A673 (cell line): ENCODE measurements at regions of chr14 and their contacts with region 1.

Region 1: GRCh38 chr14:67166450-67166853 is 22.8 kb upstream of the GARIN2 start:
- DNase-seq: peak; percentile 68
- H3K4me3 ChIP-seq: no peak overlapping the region
- H3K27ac ChIP-seq: peak overlapping the region; percentile 60
- H3K4me1 ChIP-seq: peaks cover 47% of the 10 kb centered on the region
- H3K27me3 ChIP-seq: no peaks in the 10 kb centered on the region
- CTCF ChIP-seq: peak; percentile 93

Region 2: DNA sequence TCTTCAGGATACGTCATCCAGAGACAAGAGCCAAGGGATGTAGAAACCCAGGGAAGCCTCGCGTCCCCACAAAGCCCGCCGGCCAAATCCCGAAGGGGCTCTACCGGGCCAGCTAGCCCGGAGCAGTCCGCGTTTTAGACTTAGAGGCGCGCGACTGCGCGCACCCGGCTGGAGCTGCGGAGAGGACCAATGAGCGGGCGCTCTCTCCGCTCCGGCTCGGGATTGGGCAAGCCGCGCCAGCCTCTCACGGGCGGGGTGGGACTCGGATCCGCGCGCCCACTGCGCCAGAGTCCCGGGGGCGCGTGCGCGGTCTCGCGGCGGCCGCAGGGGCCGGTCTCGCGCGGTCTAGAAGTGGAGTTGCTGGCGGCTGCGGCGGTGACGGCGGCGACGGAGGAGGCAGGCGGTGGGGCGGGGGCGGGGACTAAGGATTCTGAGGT is 74.5 kb after region 1 on chr14:
- CTCF ChIA-PET with region 1: no interaction called
- POLR2A ChIA-PET with region 1: no interaction called
- intact Hi-C with region 1: loop called (anchors 2 kb)
- DNase-seq: peak; percentile 99
- H3K4me3 ChIP-seq: peak overlapping the region; percentile 78
- H3K27ac ChIP-seq: peak overlapping the region; percentile 92
- H3K4me1 ChIP-seq: peaks cover 20% of the 10 kb centered on the region
- H3K27me3 ChIP-seq: no peaks in the 10 kb centered on the region
- CTCF ChIP-seq: no peak

Region 3: DNA sequence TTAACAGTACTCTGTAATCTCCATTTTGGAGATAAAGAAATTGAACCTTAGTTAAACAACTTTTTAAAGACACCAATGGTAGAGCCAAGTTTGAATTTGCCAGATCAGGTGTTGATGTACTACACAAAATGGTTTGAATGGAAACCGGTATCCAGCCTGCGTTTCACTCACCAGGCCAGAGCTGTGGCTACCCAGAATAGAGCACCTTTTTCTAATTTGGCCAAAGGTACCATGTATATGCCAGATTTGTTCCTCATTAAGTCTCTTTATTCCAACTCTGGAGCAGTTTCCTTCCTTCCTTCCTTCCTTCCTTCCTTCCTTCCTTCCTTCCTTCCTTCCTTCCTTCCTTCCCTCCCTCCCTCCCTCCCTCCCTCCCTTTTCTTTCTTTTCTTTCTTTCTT is 114.1 kb after region 1 on chr14:
- CTCF ChIA-PET with region 1: interaction called, 44 read pairs
- POLR2A ChIA-PET with region 1: interaction called, 3 read pairs
- intact Hi-C with region 1: loop called (anchors 1 kb)
- DNase-seq: peak; percentile 92
- H3K4me3 ChIP-seq: peak overlapping the region; percentile 41
- H3K27ac ChIP-seq: peak overlapping the region; percentile 95
- H3K4me1 ChIP-seq: peaks cover 67% of the 10 kb centered on the region
- H3K27me3 ChIP-seq: no peaks in the 10 kb centered on the region
- CTCF ChIP-seq: no peak

Region 4: DNA sequence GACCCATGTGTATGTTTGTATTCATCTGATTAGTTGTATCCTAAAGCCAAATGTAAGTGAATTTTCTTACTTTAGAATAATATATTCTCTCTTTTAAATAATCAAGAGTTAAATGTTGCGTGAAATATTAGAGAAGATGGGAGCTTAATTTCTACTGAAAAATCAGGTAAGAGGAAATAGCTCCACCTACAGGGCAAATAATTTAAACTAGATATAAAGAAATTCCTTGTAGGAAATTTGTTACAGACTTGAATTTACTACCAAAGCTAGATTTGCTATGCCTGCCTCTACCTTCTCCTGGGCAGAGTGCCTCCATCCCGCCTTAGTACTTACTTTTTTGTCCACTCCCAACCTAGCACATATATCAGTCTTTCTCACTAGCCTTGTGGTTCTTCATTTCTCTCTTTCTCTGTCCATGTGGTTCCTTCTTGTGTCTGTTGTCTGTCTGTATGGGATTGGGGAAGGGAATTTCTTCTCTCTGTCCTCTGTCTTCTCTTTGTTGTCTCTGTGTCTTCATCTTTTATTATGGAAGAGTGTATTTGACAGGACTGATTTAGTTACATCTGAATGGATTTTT is 119.5 kb after region 1 on chr14:
- CTCF ChIA-PET with region 1: interaction called, 44 read pairs
- POLR2A ChIA-PET with region 1: interaction called, 3 read pairs
- intact Hi-C with region 1: loop called (anchors 1 kb)
- DNase-seq: peak; percentile 74
- H3K4me3 ChIP-seq: no peak overlapping the region
- H3K27ac ChIP-seq: peak overlapping the region; percentile 56
- H3K4me1 ChIP-seq: peaks cover 49% of the 10 kb centered on the region
- H3K27me3 ChIP-seq: no peaks in the 10 kb centered on the region
- CTCF ChIP-seq: peak; percentile 67

Region 5: DNA sequence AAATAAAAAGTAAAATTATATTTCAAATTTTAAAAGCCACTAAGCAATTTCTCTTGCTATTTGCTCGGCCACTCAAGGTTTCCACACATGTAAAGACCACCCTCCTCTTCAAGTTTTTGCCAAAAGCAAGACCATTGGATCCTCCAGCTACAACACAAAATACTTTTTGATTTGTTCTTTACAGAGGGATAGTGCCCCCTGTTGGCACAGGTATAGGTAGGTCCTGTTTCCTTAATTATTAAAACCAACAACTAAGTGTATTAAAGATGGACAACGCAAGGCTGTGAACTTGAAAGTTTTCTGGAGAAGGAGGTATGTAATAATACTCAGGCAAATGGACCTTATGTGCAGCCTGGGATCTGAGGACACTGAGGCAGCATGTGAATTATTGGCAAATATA is 169.3 kb after region 1 on chr14:
- CTCF ChIA-PET with region 1: no interaction called
- POLR2A ChIA-PET with region 1: no interaction called
- intact Hi-C with region 1: loop called (anchors 2 kb)
- DNase-seq: peak; percentile 52
- H3K4me3 ChIP-seq: no peak overlapping the region
- H3K27ac ChIP-seq: no peak overlapping the region
- H3K4me1 ChIP-seq: peaks cover 17% of the 10 kb centered on the region
- H3K27me3 ChIP-seq: no peaks in the 10 kb centered on the region
- CTCF ChIP-seq: peak; percentile 55

Region 6: DNA sequence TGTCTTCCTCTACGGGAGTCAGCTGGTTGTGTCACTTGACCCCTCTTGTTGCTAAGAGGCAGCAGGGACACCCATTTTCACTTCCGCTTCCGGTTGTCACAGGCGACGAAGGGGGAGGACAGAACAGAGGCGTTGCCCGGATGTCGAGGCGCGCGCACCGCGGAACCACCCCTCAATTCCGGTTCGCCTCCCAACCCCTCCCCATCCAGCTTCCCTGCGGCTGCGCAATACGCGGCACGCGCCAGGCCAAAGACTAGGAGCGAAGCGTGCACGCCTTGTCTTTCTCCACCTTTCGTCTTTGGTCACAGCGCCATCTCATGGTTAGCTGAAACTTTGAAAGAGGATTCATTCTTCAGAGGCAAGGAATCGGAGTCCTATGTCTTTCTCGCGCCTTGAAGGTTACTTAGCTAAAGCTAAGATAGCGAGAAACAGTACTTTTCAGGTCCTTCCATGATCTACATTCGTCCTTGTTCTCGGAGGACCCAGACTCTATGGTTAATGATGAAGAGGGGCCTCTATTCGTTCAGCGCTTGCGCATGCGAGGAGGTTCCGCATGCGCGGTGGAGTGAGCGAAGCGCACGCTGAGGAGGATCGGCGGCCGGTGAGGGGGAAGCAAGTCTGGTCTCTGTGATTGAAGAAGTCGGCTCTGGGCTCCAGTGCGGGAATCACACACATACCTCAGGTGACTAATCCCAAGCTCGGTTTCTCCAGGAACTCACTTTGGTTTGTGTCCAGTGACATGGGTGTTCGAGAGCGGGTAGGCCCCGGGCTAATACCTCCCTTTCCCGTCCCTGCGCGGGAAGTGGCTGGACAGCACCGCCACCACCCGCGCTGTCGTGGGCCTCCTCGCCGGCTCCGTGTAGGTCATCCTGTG is 193.6 kb after region 1 on chr14 and contains the starts of genes ATP6V1D and EIF2S1:
- CTCF ChIA-PET with region 1: interaction called, 5 read pairs
- POLR2A ChIA-PET with region 1: no interaction called
- intact Hi-C with region 1: loop called (anchors 5 kb)
- DNase-seq: peak; percentile 99
- H3K4me3 ChIP-seq: peak within 1 kb of the TSS; percentile 86
- H3K27ac ChIP-seq: peak within 1 kb of the TSS; percentile 99
- H3K4me1 ChIP-seq: peaks cover 31% of the 10 kb centered on the region
- H3K27me3 ChIP-seq: no peaks in the 10 kb centered on the region
- CTCF ChIP-seq: peak; percentile 100
- total RNA-seq, gene ATP6V1D: 111 and 122 TPM in 2 replicates
- total RNA-seq, gene EIF2S1: 236 and 302 TPM in 2 replicates

Region 7: GRCh38 chr14:67571272-67571850 is 404.9 kb after region 1 on chr14:
- CTCF ChIA-PET with region 1: no interaction called
- POLR2A ChIA-PET with region 1: no interaction called
- intact Hi-C with region 1: loop called (anchors 5 kb)
- DNase-seq: peak; percentile 65
- H3K4me3 ChIP-seq: no peak overlapping the region
- H3K27ac ChIP-seq: no peak overlapping the region
- H3K4me1 ChIP-seq: no peaks in the 10 kb centered on the region
- H3K27me3 ChIP-seq: no peaks in the 10 kb centered on the region
- CTCF ChIP-seq: peak; percentile 95

Region 8: GRCh38 chr14:68685419-68686204 is 1519.2 kb after region 1 on chr14:
- CTCF ChIA-PET with region 1: no interaction called
- POLR2A ChIA-PET with region 1: no interaction called
- intact Hi-C with region 1: no loop called
- DNase-seq: no peak
- H3K4me3 ChIP-seq: no peak overlapping the region
- H3K27ac ChIP-seq: peak overlapping the region; percentile 99
- H3K4me1 ChIP-seq: peaks cover 68% of the 10 kb centered on the region
- H3K27me3 ChIP-seq: no peaks in the 10 kb centered on the region
- CTCF ChIP-seq: no peak